ENCODE measurements at regions of chr6 and their contacts with region 1.

Region 1: GRCh38 chr6:80335121-80335531 is 228.7 kb downstream of the BCKDHB start:
- DNase-seq: no peak
- ATAC-seq: no peak
- H3K4me3 ChIP-seq: no peak overlapping the region
- H3K27ac ChIP-seq: no peak overlapping the region
- H3K4me1 ChIP-seq: no peaks in the 10 kb centered on the region
- H3K27me3 ChIP-seq: no peaks in the 10 kb centered on the region
- CTCF ChIP-seq: no peak
- POLR2A ChIP-seq: no peak

Region 2: DNA sequence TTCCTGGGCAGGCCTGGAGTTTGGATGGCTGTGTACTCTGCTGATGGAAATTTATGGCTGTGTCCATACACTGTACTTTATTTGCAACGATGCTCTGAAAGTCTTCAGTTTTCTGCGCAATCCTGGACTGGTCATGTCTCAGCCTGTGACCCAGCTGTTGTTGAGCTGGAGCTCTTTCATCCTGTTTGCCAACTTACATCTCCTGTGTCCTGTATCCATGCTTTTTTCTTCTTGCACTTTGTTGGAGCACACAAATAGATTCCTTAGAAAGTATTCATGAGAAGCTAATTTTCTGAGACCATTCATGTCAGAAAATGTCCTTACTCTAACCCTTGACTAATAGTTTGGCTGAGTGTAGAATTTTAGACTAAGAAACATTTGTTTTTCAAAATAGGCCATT is 22.5 kb after region 1 on chr6:
- in situ Hi-C with region 1: no loop called
- intact Hi-C with region 1: loop called (anchors 1 kb)
- DNase-seq: peak in 1 of 2 donors; percentile 4
- ATAC-seq: peak; percentile 21 to 62
- H3K4me3 ChIP-seq: no peak overlapping the region
- H3K27ac ChIP-seq: no peak overlapping the region
- H3K4me1 ChIP-seq: no peaks in the 10 kb centered on the region
- H3K27me3 ChIP-seq: no peaks in the 10 kb centered on the region
- CTCF ChIP-seq: no peak
- POLR2A ChIP-seq: no peak